ENCODE measurements at regions of chr5 and their contacts with region 1.

Region 1: DNA sequence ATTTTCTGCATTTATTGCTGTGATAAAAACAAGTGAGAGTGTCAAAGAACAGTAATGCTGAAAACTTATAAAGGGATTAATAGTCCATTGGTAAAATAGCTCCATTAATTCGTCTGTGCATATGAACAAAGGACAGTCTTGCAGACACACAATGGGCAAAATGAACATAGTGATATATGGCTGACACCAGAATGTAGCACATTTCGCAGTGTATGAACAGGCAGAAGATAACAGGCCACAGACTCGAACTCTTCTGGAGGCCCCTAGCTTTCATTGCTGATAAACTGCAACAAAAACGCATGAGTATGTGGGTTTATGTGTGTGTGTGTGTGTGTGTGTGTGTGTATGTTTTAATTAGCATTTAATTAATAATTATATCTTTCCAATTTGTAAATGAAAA is 354.8 kb downstream of the TAF11L14 start:
- DNase-seq: no peak
- H3K4me3 ChIP-seq: no peak overlapping the region
- H3K27ac ChIP-seq: no peak overlapping the region
- H3K4me1 ChIP-seq: no peaks in the 10 kb centered on the region
- H3K27me3 ChIP-seq: no peaks in the 10 kb centered on the region
- CTCF ChIP-seq: no peak

Region 2: GRCh38 chr5:17944046-17944445 is 45.0 kb before region 1 on chr5:
- CTCF ChIA-PET with region 1: no interaction called
- dilution Hi-C with region 1: no loop called
- in situ Hi-C with region 1: no loop called
- intact Hi-C with region 1: no loop called
- DNase-seq: no peak
- H3K4me3 ChIP-seq: no peak overlapping the region
- H3K27ac ChIP-seq: no peak overlapping the region
- H3K4me1 ChIP-seq: no peaks in the 10 kb centered on the region
- H3K27me3 ChIP-seq: no peaks in the 10 kb centered on the region
- CTCF ChIP-seq: no peak

Region 3: DNA sequence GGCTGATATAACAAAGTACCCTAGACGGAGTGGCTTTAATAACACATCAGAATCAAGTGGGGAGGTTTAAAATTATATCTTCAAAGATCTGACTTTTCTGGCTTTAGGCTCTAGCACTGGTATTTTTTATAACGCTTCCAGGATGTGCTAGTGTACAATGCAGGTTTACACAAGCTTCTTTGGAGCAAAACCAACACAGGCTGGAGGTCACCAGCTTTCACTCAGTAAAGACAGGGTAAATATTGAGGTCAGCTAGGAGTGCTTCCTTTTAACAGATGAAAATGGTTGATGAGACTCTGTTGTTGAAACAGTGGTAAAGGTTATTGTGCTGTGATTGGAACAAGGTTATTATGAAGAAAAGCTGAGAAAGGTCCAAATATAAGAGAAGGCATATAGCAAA is 59.4 kb after region 1 on chr5:
- CTCF ChIA-PET with region 1: interaction called, 17 read pairs
- dilution Hi-C with region 1: no loop called
- in situ Hi-C with region 1: no loop called
- intact Hi-C with region 1: no loop called
- DNase-seq: no peak
- H3K4me3 ChIP-seq: no peak overlapping the region
- H3K27ac ChIP-seq: no peak overlapping the region
- H3K4me1 ChIP-seq: no peaks in the 10 kb centered on the region
- H3K27me3 ChIP-seq: no peaks in the 10 kb centered on the region
- CTCF ChIP-seq: no peak